Caco-2 (cell line): ENCODE measurements at regions of chr7 and their contacts with region 1.

Region 1: DNA sequence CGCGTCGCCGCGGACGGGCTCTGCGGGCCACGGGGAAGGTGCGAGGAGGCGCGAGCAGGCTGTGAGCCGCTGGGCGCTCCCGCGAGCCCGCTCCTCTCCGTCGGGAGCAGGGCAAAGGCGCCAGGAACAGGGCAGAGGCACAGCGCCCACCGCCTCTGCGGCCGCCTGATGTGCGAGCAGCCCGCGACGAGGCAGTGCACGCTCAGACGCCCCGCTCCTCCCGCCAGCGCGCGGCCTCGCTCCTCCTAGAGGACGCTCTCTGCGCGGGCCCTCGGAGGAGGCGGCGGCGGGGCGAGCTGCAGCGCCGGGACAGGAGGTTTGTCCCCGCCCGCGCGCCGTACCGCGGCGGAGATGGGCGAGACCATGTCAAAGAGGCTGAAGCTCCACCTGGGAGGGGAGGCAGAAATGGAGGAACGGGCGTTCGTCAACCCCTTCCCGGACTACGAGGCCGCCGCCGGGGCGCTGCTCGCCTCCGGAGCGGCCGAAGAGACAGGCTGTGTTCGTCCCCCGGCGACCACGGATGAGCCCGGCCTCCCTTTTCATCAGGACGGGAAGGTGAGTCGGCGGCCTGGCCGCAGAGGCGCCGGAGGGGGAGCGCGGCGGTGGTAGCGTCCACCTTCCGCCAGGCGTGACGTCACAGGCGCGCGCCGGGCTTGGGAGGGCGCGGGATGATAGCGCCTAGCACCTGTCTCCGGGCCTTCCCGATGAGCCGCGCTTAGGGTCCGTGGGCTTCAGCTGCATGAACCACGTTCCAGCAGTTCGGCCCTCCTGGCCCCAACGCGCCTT is 731 bp downstream of the LANCL2 start:
- DNase-seq: peak; percentile 95 to 97
- H3K4me3 ChIP-seq: peak overlapping the region; percentile 73
- H3K4me3 Mint-ChIP-seq: peak overlapping the region; percentile 98
- H3K27ac Mint-ChIP-seq: peak overlapping the region; percentile 99
- H3K4me1 ChIP-seq: no peaks in the 10 kb centered on the region; the same call in 1 of the 2 replicates
- H3K4me1 Mint-ChIP-seq: peaks cover 18% of the 10 kb centered on the region
- H3K27me3 ChIP-seq: no peaks in the 10 kb centered on the region
- H3K27me3 Mint-ChIP-seq: no peaks in the 10 kb centered on the region
- CTCF ChIP-seq: peak; percentile 17 to 29

Region 2: DNA sequence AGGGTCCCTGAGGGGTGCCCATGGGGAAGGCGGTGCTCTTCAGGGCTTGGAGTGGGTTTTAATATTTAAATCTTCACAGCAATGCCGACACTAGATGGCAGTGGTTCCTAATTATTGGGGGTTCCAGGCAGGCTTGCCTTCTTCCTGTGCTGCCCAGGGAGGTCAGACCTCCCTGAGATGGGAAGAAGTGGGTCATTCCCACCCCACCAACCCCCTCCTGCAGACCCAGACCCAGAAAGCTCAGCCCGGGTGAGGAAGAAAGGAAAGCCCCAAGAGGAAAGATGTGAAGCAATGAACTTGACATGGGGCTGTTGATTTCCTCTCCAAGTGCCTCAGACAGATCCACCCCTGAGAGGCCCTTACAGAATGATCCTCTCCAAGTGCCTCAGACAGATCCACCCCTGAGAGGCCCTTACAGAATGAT is 85.8 kb before region 1 on chr7:
- CTCF ChIA-PET with region 1: no interaction called
- POLR2A ChIA-PET with region 1: no interaction called
- intact Hi-C with region 1: loop called (anchors 1 kb)
- DNase-seq: peak; percentile 73 to 82
- H3K4me3 ChIP-seq: no peak overlapping the region
- H3K4me3 Mint-ChIP-seq: no peak overlapping the region
- H3K27ac Mint-ChIP-seq: no peak overlapping the region
- H3K4me1 ChIP-seq: no peaks in the 10 kb centered on the region
- H3K4me1 Mint-ChIP-seq: no peaks in the 10 kb centered on the region
- H3K27me3 ChIP-seq: no peaks in the 10 kb centered on the region
- H3K27me3 Mint-ChIP-seq: peaks cover 6% of the 10 kb centered on the region
- CTCF ChIP-seq: peak; percentile 63 to 74

Region 3: DNA sequence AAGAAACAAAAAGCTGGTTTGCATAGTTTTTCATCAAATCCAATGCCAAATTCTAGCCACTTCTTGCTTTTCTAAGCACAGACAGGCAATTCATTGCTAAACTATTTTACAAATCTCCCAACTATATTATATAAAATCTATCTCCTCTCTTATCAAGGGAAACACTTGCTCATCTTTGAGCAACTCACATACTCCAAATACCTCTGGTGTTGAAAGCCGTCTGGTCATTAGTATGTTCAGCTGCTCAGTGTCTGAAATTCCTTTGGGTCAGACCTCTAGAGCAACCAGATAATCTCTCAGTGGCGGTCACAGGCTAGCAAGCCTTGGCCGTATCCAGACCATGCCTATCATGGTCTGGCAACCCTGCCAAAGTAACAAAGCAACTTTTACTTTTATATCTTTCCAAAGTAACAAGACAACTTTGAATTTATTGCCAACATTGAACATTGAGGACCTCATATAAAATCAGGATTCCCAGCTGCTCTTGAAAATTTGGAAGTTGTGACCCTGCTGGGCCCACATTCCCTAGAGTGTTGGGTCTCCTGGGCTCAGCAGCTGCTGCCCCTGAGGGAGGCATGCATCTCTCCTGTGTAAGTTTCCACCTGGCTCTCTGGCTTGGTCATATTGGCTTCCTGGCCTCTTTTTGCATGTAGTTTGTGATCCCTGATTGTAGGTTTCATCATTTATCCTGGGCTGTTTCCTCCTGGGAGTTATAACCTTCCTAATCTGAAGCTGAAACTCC is 57.5 kb before region 1 on chr7:
- CTCF ChIA-PET with region 1: no interaction called
- POLR2A ChIA-PET with region 1: interaction called, 9 read pairs
- intact Hi-C with region 1: loop called (anchors 1 kb)
- DNase-seq: peak; percentile 78
- H3K4me3 ChIP-seq: no peak overlapping the region
- H3K4me3 Mint-ChIP-seq: no peak overlapping the region
- H3K27ac Mint-ChIP-seq: peak overlapping the region; percentile 92
- H3K4me1 ChIP-seq: peaks cover 23% of the 10 kb centered on the region
- H3K4me1 Mint-ChIP-seq: peaks cover 26% of the 10 kb centered on the region
- H3K27me3 ChIP-seq: no peaks in the 10 kb centered on the region
- H3K27me3 Mint-ChIP-seq: no peaks in the 10 kb centered on the region
- CTCF ChIP-seq: no peak

Region 4: GRCh38 chr7:55336540-55336939 is 29.3 kb before region 1 on chr7:
- CTCF ChIA-PET with region 1: no interaction called
- POLR2A ChIA-PET with region 1: interaction called, 7 read pairs
- intact Hi-C with region 1: loop called (anchors 1 kb)
- DNase-seq: peak; percentile 41 to 66
- H3K4me3 ChIP-seq: no peak overlapping the region
- H3K4me3 Mint-ChIP-seq: no peak overlapping the region
- H3K27ac Mint-ChIP-seq: peak overlapping the region; percentile 32
- H3K4me1 ChIP-seq: peaks cover 34% of the 10 kb centered on the region
- H3K4me1 Mint-ChIP-seq: peaks cover 30% of the 10 kb centered on the region
- H3K27me3 ChIP-seq: no peaks in the 10 kb centered on the region
- H3K27me3 Mint-ChIP-seq: no peaks in the 10 kb centered on the region
- CTCF ChIP-seq: no peak

Region 5: DNA sequence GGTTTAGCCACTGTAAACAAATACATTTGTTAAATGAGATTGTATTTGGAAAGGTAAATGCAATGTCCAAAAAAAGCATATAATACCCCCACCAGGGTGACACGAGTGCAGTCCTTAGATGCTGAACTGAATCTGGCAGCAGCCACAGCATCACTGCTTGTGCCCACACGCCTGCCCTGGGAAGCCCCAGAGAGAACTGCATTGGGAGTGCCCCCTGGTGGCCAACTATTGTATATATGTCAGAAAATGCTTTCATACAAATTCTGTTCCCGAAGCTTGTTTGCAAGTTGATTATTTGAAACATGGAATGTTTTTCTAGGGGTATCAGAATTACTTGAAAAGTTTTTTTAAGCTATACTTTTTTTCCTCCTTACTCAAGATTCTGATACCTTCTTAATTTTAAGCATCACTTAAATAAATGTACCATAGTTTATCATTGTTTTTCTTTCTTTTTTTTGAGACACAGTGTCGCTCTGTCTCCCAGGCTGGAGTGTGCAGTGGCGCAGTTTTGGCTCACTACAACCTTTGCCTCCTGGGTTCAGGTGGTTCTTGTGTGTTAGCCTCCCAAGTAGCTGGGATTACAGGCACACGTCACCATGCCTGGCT is 49.4 kb after region 1 on chr7:
- CTCF ChIA-PET with region 1: interaction called, 3 read pairs
- POLR2A ChIA-PET with region 1: no interaction called
- intact Hi-C with region 1: loop called (anchors 1 kb)
- DNase-seq: peak; percentile 80 to 89
- H3K4me3 ChIP-seq: no peak overlapping the region
- H3K4me3 Mint-ChIP-seq: no peak overlapping the region
- H3K27ac Mint-ChIP-seq: no peak overlapping the region
- H3K4me1 ChIP-seq: peaks cover 2% of the 10 kb centered on the region; the same call in 1 of the 2 replicates
- H3K4me1 Mint-ChIP-seq: no peaks in the 10 kb centered on the region
- H3K27me3 ChIP-seq: no peaks in the 10 kb centered on the region
- H3K27me3 Mint-ChIP-seq: no peaks in the 10 kb centered on the region
- CTCF ChIP-seq: peak; percentile 85 to 88

Region 6: DNA sequence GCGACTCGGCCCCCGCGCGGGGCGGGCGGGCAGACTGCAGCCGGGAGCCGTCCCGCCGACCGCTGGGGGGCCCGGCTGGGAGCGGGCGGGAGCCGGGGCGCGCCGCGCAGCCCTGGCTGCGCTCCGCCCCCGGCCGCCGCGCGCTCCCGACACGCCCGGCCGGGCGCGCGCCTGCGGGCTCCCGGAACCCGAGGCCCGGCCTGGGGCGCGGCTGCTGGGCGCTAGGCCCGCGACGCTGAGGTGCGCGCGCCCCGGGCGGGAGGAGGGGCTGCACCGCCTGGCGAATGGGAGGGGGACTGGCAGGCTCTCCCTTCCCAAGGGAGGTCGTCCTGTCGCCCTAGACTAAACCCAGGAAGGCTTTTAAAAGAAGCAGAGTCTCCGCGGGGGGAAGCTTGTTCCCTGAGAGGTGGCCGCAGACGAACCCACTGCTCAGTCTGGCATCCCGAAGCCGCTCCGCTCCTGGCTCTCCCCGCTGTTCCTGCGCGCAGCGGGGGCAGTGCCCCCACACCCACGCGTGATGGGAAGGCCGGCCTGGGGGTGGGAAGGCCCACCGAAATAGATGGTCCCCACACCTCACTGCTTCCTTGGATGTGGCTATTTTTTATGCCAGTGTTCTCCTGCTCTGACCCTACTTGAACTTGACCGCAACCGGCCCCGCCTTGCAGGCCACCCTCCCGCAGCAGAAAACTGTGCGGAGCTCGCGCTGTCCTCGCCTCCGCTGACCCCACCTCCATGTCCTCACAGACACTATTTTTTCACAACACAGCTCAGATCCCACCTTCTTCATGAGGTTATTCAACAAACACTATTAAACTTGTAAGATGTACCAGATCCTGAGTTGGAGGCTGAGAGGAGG is 206.7 kb after region 1 on chr7 and contains the start of gene VOPP1:
- CTCF ChIA-PET with region 1: no interaction called
- POLR2A ChIA-PET with region 1: no interaction called
- intact Hi-C with region 1: loop called (anchors 1 kb)
- DNase-seq: peak; percentile 55 to 82
- H3K4me3 ChIP-seq: peak within 1 kb of the TSS; percentile 93
- H3K4me3 Mint-ChIP-seq: peak within 1 kb of the TSS; percentile 90
- H3K27ac Mint-ChIP-seq: peak within 1 kb of the TSS; percentile 26
- H3K4me1 ChIP-seq: no peaks in the 10 kb centered on the region
- H3K4me1 Mint-ChIP-seq: peaks cover 16% of the 10 kb centered on the region
- H3K27me3 ChIP-seq: no peaks in the 10 kb centered on the region; the same call in 1 of the 2 replicates
- H3K27me3 Mint-ChIP-seq: no peaks in the 10 kb centered on the region
- CTCF ChIP-seq: no peak
- total RNA-seq, gene VOPP1: 43.6 and 46.8 TPM in 2 replicates